ENCODE measurements at regions of chr18 and their contacts with region 1.

Region 1: DNA sequence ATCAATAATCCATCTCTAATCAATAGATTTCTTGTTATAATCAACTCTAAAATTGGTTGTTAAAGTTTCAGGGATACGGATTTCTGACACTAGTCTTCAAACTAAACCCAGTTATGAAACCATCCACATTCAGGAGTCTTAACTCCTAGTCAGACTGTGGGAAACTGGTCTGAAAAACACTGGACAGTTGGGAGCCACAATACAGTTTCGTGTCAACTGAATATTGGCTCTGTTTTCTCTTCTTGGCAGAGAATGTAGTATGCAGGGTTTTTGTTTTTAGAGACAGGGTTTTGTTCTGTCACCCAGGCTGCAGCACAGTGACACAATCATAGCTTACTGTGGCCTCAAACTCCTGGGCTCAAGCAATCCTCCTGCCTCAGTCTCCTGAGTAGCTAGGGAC is 123.1 kb downstream of the RTTN start:
- DNase-seq: no peak
- H3K4me3 Mint-ChIP-seq: no peak overlapping the region
- H3K27ac Mint-ChIP-seq: no peak overlapping the region
- H3K4me1 Mint-ChIP-seq: no peaks in the 10 kb centered on the region
- H3K27me3 Mint-ChIP-seq: no peaks in the 10 kb centered on the region

Region 2: GRCh38 chr18:68847219-68847837 is 1235.1 kb before region 1 on chr18:
- CTCF ChIA-PET with region 1: no interaction called
- intact Hi-C with region 1: loop called (anchors 1 kb)
- DNase-seq: no peak
- H3K4me3 Mint-ChIP-seq: no peak overlapping the region
- H3K27ac Mint-ChIP-seq: no peak overlapping the region
- H3K4me1 Mint-ChIP-seq: no peaks in the 10 kb centered on the region
- H3K27me3 Mint-ChIP-seq: no peaks in the 10 kb centered on the region

Region 3: GRCh38 chr18:68925268-68925667 is 1157.2 kb before region 1 on chr18:
- CTCF ChIA-PET with region 1: no interaction called
- intact Hi-C with region 1: loop called (anchors 1 kb)
- DNase-seq: no peak
- H3K4me3 Mint-ChIP-seq: no peak overlapping the region
- H3K27ac Mint-ChIP-seq: no peak overlapping the region
- H3K4me1 Mint-ChIP-seq: no peaks in the 10 kb centered on the region
- H3K27me3 Mint-ChIP-seq: no peaks in the 10 kb centered on the region

Region 4: GRCh38 chr18:69636529-69637301 is 445.7 kb before region 1 on chr18:
- CTCF ChIA-PET with region 1: interaction called, 5 read pairs
- intact Hi-C with region 1: loop called (anchors 1 kb)
- DNase-seq: peak; percentile 34
- H3K4me3 Mint-ChIP-seq: no peak overlapping the region
- H3K27ac Mint-ChIP-seq: no peak overlapping the region
- H3K4me1 Mint-ChIP-seq: no peaks in the 10 kb centered on the region
- H3K27me3 Mint-ChIP-seq: no peaks in the 10 kb centered on the region

Region 5: GRCh38 chr18:69845593-69846506 is 236.6 kb before region 1 on chr18:
- CTCF ChIA-PET with region 1: no interaction called
- intact Hi-C with region 1: loop called (anchors 2 kb)
- DNase-seq: no peak
- H3K4me3 Mint-ChIP-seq: no peak overlapping the region
- H3K27ac Mint-ChIP-seq: no peak overlapping the region
- H3K4me1 Mint-ChIP-seq: no peaks in the 10 kb centered on the region
- H3K27me3 Mint-ChIP-seq: no peaks in the 10 kb centered on the region

Region 6: GRCh38 chr18:70553245-70553935 is 471.0 kb after region 1 on chr18:
- CTCF ChIA-PET with region 1: no interaction called
- intact Hi-C with region 1: no loop called
- DNase-seq: no peak
- H3K4me3 Mint-ChIP-seq: no peak overlapping the region
- H3K27ac Mint-ChIP-seq: no peak overlapping the region
- H3K4me1 Mint-ChIP-seq: peaks cover 12% of the 10 kb centered on the region
- H3K27me3 Mint-ChIP-seq: no peaks in the 10 kb centered on the region